Activated naive CD4-positive, alpha-beta T cell treated with anti-CD3 and anti-CD28 coated beads for 36 hours (primary cell): ENCODE measurements at regions of chr1 and their contacts with region 1.

Region 1: GRCh38 chr1:172338295-172338735 is 82.2 kb upstream of the C1orf105 start:
- DNase-seq: peak; percentile 89
- H3K4me3 Mint-ChIP-seq: no peak overlapping the region
- H3K27ac Mint-ChIP-seq: peak overlapping the region; percentile 67
- H3K4me1 Mint-ChIP-seq: peaks cover 49% of the 10 kb centered on the region
- H3K27me3 Mint-ChIP-seq: no peaks in the 10 kb centered on the region

Region 2: GRCh38 chr1:172135076-172135672 is 203.1 kb before region 1 on chr1:
- CTCF ChIA-PET with region 1: interaction called, 5 read pairs
- intact Hi-C with region 1: loop called (anchors 1 kb)
- DNase-seq: peak; percentile 43
- H3K4me3 Mint-ChIP-seq: no peak overlapping the region
- H3K27ac Mint-ChIP-seq: no peak overlapping the region
- H3K4me1 Mint-ChIP-seq: peaks cover 17% of the 10 kb centered on the region
- H3K27me3 Mint-ChIP-seq: no peaks in the 10 kb centered on the region

Region 3: DNA sequence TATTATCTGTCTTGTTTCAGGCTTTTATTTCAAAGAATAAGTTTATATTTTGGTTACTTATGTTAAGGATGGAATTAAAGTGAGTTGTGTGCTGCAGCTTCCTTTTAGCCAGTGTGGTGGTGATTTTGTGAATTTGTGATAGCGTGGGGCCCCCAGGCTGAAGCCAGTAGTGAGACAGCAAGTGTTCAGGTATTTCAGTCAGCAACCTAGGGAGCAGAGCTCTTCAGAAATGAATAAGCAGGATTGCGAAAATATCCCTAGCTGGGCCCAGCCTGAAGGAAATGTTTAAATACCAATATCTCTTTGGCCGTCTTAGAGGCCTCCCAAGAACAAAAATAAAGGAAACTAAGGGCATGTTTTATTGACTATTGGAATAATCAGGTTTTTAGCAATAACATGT is 68.7 kb before region 1 on chr1:
- CTCF ChIA-PET with region 1: no interaction called
- intact Hi-C with region 1: loop called (anchors 1 kb)
- DNase-seq: no peak
- H3K4me3 Mint-ChIP-seq: no peak overlapping the region
- H3K27ac Mint-ChIP-seq: peak overlapping the region; percentile 41
- H3K4me1 Mint-ChIP-seq: peaks cover 41% of the 10 kb centered on the region
- H3K27me3 Mint-ChIP-seq: no peaks in the 10 kb centered on the region

Region 4: DNA sequence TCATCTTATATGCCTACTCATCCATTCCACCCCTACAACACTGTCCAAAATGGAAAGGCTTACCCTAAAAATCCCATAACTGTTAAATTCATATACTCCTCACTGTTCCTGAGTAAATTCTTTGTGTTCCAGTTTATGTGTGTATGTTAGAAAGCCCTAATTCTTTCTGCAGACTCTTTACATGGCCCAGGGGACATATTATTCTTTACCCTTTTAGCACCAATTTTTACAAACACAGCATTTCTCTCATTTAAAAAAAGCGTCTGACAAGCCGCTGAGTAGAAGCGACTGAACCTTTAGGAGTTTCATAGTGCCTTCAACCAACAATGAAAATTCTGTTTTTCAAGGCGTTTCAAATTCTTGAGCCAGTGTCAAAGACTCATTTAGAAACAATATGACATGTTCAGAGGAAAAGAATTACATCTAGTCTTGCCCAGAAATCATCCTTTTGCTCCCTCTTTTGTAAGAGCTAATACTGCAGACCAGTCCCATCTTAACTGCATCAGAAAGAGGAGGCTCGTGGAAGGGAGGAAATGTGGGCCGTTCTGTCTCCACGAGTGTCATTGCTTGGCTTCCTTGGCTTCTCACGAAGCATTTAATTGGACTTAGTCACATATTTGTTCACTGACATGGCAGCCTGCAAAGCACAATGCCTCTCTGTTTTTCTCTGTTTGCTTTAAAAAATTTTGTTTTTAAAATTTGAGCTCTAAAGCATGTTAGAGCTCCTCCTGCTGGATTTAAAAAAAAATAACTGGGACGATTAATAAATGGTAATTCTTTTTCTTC is 60.8 kb after region 1 on chr1:
- CTCF ChIA-PET with region 1: interaction called, 14 read pairs
- intact Hi-C with region 1: loop called (anchors 1 kb)
- DNase-seq: peak; percentile 37
- H3K4me3 Mint-ChIP-seq: peak overlapping the region; percentile 19
- H3K27ac Mint-ChIP-seq: peak overlapping the region; percentile 54
- H3K4me1 Mint-ChIP-seq: peaks cover 68% of the 10 kb centered on the region
- H3K27me3 Mint-ChIP-seq: no peaks in the 10 kb centered on the region

Region 5: DNA sequence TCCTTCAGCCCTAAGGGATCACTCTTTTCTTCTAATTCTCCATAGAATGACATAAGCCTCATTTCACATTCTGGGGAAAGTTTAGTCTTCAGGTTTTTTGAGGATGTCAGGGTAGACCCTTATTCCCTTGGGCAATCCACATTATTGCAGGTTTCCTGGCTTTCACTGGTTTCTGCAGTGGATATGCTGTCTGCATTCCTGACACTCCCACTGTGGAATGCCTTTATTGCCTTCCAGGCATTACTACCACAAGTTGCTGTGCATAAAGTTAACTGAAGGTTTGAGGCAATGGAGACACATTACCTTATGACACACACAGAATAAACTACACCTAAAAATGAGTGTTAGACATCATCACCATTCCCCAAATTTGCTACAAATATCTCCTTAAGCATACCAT is 333.3 kb after region 1 on chr1:
- CTCF ChIA-PET with region 1: no interaction called
- intact Hi-C with region 1: loop called (anchors 1 kb)
- DNase-seq: no peak
- H3K4me3 Mint-ChIP-seq: no peak overlapping the region
- H3K27ac Mint-ChIP-seq: no peak overlapping the region
- H3K4me1 Mint-ChIP-seq: peaks cover 70% of the 10 kb centered on the region
- H3K27me3 Mint-ChIP-seq: no peaks in the 10 kb centered on the region

Region 6: GRCh38 chr1:172870901-172871606 is 532.7 kb after region 1 on chr1:
- CTCF ChIA-PET with region 1: no interaction called
- intact Hi-C with region 1: loop called (anchors 2 kb)
- DNase-seq: no peak
- H3K4me3 Mint-ChIP-seq: no peak overlapping the region
- H3K27ac Mint-ChIP-seq: no peak overlapping the region
- H3K4me1 Mint-ChIP-seq: peaks cover 32% of the 10 kb centered on the region
- H3K27me3 Mint-ChIP-seq: peaks cover 24% of the 10 kb centered on the region